ENCODE measurements at regions of chr22 and their contacts with region 1.

Region 1: DNA sequence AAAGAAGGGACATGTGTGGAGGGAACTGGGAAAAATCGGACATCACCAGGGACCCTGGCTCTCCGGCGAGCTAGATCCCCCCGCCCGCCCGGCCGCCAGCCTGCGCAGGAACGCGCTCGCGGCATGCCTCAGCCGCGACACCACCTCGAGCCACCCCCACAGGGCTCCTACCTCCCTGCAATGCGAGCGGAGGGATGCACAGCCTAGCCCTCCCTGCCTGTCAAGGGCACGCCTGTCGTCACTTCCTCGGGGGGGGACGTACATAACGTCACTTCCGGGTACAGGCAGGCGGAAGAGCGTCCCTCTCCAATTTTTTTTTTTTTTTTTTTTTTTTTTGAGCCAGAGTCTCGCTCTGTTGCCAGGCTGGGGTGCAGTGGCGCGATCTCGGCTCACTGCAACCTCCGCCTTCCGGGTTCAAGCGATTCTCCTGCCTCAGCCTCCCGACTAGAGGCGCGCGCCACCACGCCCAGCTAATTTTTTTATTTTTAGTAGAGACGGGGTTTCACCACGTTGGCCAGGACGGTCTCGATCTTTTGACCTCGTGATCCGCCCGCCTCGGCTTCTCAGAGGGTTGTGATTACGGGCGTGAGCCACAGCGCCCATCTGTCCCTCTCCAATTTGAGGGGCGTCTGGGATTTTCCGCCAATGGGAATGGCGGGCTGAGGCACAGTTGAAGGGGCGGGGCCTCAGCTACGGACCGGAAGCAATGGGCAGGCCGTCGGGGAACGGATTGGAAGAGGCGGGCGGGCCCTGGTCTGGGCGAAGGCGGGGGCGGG is at the start of gene TXN2:
- DNase-seq: peak; percentile 98 to 99 (median 99)
- ATAC-seq: peak; percentile 95 to 97
- H3K4me3 ChIP-seq: peak within 1 kb of the TSS; percentile 50
- H3K27ac ChIP-seq: peak within 1 kb of the TSS; percentile 95
- H3K4me1 ChIP-seq: peaks cover 2% of the 10 kb centered on the region
- H3K27me3 ChIP-seq: no peaks in the 10 kb centered on the region
- total RNA-seq, gene TXN2: 95.4 to 114 (median 105) TPM

Region 2: DNA sequence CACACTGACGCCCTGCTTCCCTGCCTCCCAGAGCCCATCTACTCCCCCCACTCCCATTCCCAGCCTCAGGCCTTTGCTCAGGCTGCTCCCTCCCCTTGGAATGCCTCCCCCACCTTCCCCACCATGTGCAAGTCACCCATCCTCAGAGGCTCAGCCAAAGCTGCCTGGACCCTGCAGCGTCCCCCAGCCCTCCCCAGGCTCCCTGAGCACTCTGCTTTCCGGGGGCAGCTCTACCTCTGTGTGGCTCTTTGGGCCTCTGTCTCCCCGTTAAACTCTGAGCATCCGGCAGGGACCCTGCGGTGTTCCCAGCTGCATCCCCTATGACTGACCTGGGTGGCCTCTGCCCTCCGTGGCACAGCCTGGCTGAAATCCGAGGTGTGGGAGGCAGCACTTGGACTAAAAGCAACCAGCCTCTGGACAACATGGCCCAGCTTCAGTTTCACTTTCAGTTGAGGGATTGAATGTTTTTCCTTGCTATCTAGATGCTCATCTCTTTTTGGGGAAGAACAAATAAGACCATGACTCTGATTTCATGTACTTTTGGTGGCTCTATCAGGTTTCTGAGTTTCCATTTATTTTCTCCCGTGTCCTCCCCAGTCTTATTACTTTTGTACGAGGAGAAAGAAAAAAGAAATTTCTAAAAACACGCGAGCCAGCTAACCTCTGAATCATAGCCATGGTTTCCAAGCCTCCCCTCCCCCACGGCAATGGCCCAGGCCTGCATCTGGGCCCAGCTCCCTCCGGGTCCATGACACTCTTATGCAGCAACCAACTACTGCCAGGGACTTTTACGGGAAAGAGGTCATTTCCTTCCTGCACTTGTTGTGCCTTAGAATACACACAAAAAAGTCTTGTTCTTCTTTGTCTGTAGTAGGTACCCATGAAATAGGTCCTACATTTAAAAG is 324.8 kb before region 1 on chr22:
- intact Hi-C with region 1: loop called in 1 of 4 experiments (anchors 10 kb)
- DNase-seq: peak; percentile 91 to 95 (median 93)
- ATAC-seq: peak; percentile 87 to 89
- H3K4me3 ChIP-seq: peak overlapping the region; percentile 72
- H3K27ac ChIP-seq: peak overlapping the region; percentile 49
- H3K4me1 ChIP-seq: peaks cover 26% of the 10 kb centered on the region
- H3K27me3 ChIP-seq: no peaks in the 10 kb centered on the region